CD8-positive, alpha-beta T cell (primary cell): ENCODE measurements at regions of chr15 and their contacts with region 1.

Region 1: GRCh38 chr15:72117486-72118399 is at the start of gene MYO9A:
- DNase-seq: peak; percentile 97 to 100 (median 99)
- ATAC-seq: peak; percentile 80
- H3K4me3 ChIP-seq: peak within 1 kb of the TSS; percentile 78 to 93
- H3K4me3 Mint-ChIP-seq: peak within 1 kb of the TSS; percentile 99
- H3K27ac ChIP-seq: peak within 1 kb of the TSS; percentile 95 to 97
- H3K27ac Mint-ChIP-seq: peak within 1 kb of the TSS; percentile 99
- H3K4me1 ChIP-seq: peaks cover 18% of the 10 kb centered on the region
- H3K4me1 Mint-ChIP-seq: peaks cover 45% of the 10 kb centered on the region
- H3K27me3 ChIP-seq: no peaks in the 10 kb centered on the region
- H3K27me3 Mint-ChIP-seq: no peaks in the 10 kb centered on the region
- CTCF ChIP-seq: no peak
- total RNA-seq, gene MYO9A: 15.1 to 20.0 TPM

Region 2: GRCh38 chr15:72319985-72320671 is 202.4 kb after region 1 on chr15 and contains the start of gene CELF6:
- CTCF ChIA-PET with region 1: no interaction called
- POLR2A ChIA-PET with region 1: no interaction called
- intact Hi-C with region 1: loop called in 1 of 2 experiments (anchors 1 kb)
- DNase-seq: peak; percentile 41 to 91 (median 70)
- ATAC-seq: peak; percentile 82
- H3K4me3 ChIP-seq: peak within 1 kb of the TSS; percentile 14 to 53
- H3K4me3 Mint-ChIP-seq: peak within 1 kb of the TSS; percentile 80
- H3K27ac ChIP-seq: peak within 1 kb of the TSS in 1 of 2 experiments; percentile 25
- H3K27ac Mint-ChIP-seq: peak within 1 kb of the TSS; percentile 82
- H3K4me1 ChIP-seq: peaks cover 7% of the 10 kb centered on the region
- H3K4me1 Mint-ChIP-seq: peaks cover 17% of the 10 kb centered on the region
- H3K27me3 ChIP-seq: no peaks in the 10 kb centered on the region
- H3K27me3 Mint-ChIP-seq: no peaks in the 10 kb centered on the region
- CTCF ChIP-seq: no peak
- total RNA-seq, gene CELF6: 2.4 to 2.7 TPM

Region 3: GRCh38 chr15:73051811-73052678 is 934.3 kb after region 1 on chr15 and contains the start of gene NEO1:
- CTCF ChIA-PET with region 1: no interaction called
- POLR2A ChIA-PET with region 1: no interaction called
- intact Hi-C with region 1: loop called (anchors 5 kb)
- DNase-seq: peak; percentile 52 to 90 (median 78)
- ATAC-seq: peak; percentile 73
- H3K4me3 ChIP-seq: peak within 1 kb of the TSS; percentile 73 to 85
- H3K4me3 Mint-ChIP-seq: peak within 1 kb of the TSS; percentile 82
- H3K27ac ChIP-seq: peak within 1 kb of the TSS; percentile 56
- H3K27ac Mint-ChIP-seq: peak within 1 kb of the TSS; percentile 61
- H3K4me1 ChIP-seq: peaks cover 10% of the 10 kb centered on the region
- H3K4me1 Mint-ChIP-seq: peaks cover 13% of the 10 kb centered on the region
- H3K27me3 ChIP-seq: no peaks in the 10 kb centered on the region
- H3K27me3 Mint-ChIP-seq: peaks cover 21% of the 10 kb centered on the region
- CTCF ChIP-seq: no peak
- total RNA-seq, gene NEO1: 3.0 to 3.3 TPM